ENCODE measurements at regions of chr4 and their contacts with region 1.

Region 1: GRCh38 chr4:73019462-73020047 is 50.0 kb downstream of the COX18 start:
- DNase-seq: no peak

Region 2: GRCh38 chr4:72295966-72296557 is 723.5 kb before region 1 on chr4:
- intact Hi-C with region 1: loop called (anchors 5 kb)
- DNase-seq: no peak

Region 3: DNA sequence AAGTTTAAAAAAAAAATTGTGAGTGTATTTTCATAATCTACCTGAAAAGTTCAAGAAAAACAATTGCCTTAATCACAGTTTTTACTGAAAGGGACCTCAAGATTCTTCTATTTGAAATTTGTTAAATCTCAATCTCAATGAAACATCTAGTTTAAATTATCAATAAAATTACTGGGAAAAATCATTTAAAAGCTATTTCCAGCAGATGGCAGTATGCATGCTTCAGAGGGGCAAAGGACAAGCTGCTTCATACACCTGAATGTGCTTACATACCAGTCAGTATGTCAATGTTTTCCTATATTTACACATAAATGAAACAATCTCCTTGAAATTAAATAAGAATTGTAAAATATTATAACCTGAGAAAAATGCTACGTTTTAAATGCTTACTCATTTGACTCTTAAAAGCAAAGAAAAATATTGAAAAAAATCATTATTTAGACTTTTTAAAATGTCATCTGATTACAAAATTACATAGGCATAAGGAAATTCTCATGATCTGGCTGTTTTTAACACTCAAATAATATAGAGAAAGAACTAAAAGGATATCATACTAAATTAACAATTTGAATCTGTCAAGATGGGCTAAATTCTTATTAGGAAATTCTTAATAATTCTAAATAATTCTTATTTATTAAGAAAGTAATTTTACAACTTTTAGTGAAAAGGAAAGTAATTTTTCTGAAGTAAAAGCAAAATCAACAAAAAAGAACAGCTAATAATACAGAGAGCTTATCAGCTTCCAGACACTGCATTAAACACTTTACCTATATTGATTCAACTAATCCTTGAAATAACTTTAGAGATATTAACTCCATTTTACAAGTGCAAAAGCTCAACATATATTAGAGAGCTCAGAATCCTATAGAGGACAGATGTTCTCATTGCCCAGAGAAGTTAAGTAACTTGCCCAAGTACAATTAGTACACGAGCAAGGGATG is 692.6 kb before region 1 on chr4:
- intact Hi-C with region 1: loop called (anchors 5 kb)
- DNase-seq: no peak

Region 4: DNA sequence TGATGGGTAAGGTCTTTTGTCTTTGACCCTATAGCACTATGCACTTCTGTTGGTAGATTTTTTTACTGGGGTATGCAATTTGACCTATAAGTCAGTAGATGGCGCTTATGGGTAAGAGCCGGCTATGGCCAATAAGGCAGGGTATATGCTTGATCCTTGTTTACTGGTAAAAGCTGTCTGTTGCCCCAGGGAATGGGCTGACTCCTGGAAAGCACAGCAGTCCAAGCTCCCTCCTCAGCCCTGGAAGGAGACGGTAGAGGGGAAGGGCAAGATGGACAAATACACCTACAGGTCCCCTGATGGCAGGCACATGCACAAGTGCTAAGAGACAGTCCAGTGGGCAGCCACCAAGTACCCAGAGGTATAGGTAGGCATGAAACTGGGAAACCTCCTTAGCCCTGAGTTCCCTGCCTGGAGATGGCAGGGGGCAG is 514.2 kb before region 1 on chr4:
- intact Hi-C with region 1: loop called (anchors 5 kb)
- DNase-seq: peak in 1 of 10 donors; percentile 77

Region 5: DNA sequence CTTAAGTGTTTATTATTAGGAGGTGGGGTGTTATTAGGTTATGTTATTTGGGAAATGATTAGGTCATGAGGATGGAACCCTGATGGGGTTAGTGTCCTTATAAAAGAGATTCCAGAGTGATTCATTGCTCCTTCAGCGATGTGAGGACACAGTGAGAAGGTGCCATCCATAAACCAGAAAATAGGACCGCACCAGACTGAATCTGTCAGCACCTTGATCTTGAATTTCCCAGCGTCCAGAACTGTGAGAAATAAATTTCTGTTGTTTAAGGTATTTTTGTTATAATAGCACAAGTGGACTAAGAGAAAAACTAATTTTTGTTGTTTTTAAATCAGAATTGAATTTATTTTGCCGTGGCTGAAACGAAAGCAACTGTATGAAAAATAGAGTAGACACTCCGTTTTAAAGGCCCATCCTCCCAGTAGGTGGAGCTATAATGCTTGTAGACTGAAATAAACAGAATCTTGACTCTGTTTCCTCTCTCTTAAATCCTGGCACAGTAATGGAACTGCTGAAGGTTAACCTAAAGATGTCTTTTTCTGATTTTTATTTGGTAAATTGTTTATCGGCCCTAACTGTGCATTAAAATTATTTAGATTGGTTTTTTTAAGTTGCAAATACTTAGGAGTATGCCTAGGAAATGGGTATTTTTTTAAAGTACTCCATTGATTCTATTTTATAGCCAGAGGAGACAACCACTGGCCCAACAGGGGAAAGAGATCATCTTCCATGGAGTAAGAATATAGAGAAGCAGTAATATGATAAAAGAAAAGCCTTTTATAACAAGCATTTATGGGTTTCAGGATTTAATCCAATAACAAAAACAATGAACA is 317.4 kb before region 1 on chr4:
- intact Hi-C with region 1: loop called (anchors 5 kb)
- DNase-seq: peak in 1 of 10 donors; percentile 11

Region 6: GRCh38 chr4:73844352-73844751 is 824.8 kb after region 1 on chr4:
- intact Hi-C with region 1: no loop called
- DNase-seq: no peak